ENCODE measurements at regions of chr16 and their contacts with region 1.

Region 1: GRCh38 chr16:86680162-86680561 is 101.8 kb downstream of the FOXL1 start:
- DNase-seq: peak in 1 of 2 donors; percentile 87
- H3K4me3 ChIP-seq: peak overlapping the region in 1 of 2 donors; percentile 57
- H3K27ac ChIP-seq: peak overlapping the region; percentile 93 to 94
- H3K4me1 ChIP-seq: peaks cover 3 to 44% of the 10 kb centered on the region in 2 donors
- H3K27me3 ChIP-seq: no peaks in the 10 kb centered on the region
- CTCF ChIP-seq: no peak

Region 2: DNA sequence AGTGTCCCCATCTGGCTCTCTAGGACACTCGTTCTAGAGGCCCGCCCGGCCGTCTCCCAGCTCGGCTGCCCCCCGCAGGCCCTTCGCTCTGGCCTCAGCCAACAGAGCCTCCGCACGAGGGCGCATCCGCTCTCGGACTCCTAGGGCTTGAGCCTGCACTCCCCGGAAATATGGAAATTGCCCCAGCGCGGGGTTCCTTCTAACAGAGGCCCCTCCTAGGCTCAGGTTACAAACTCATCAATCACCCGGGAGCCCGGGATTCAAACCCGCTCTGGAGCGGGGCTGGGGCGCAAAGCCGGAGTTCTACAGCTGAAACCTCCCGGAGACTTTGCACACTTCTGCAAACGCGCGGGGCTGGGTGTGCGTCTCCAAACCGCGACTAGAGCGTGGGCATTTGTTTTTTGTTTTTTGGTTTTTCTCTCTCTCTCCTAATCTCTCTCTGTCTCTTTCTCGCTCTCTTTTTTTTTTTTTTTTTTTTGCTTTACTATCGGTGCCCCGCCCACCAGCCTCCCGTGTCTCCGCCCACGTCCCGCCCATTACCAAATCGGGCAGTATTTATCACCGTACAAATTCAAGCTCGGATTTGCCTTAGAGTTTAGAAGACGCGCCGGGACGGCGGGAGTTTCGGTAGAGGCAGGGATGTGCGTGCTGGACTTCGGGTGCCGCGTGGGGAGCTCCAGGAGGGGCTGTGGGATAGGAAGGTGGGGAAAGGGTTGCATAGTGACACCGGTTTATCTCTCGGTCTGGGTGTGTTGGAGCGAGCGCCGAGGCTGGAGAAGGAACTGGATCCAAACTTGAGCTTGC is 104.2 kb before region 1 on chr16:
- intact Hi-C with region 1: loop called (anchors 2 kb)
- DNase-seq: peak; percentile 75 to 96
- H3K4me3 ChIP-seq: peak overlapping the region; percentile 57 to 79
- H3K27ac ChIP-seq: peak overlapping the region; percentile 91 to 99
- H3K4me1 ChIP-seq: peaks cover 7 to 53% of the 10 kb centered on the region in 2 donors
- H3K27me3 ChIP-seq: no peaks in the 10 kb centered on the region
- CTCF ChIP-seq: peak; percentile 68 to 75 (median 70)

Region 3: GRCh38 chr16:86740906-86741799 is 61.0 kb after region 1 on chr16:
- intact Hi-C with region 1: loop called (anchors 2 kb)
- DNase-seq: peak; percentile 60 to 93
- H3K4me3 ChIP-seq: peak overlapping the region; percentile 46 to 58
- H3K27ac ChIP-seq: peak overlapping the region; percentile 94 to 100
- H3K4me1 ChIP-seq: peaks cover 0 to 16% of the 10 kb centered on the region in 2 donors
- H3K27me3 ChIP-seq: no peaks in the 10 kb centered on the region
- CTCF ChIP-seq: no peak

Region 4: DNA sequence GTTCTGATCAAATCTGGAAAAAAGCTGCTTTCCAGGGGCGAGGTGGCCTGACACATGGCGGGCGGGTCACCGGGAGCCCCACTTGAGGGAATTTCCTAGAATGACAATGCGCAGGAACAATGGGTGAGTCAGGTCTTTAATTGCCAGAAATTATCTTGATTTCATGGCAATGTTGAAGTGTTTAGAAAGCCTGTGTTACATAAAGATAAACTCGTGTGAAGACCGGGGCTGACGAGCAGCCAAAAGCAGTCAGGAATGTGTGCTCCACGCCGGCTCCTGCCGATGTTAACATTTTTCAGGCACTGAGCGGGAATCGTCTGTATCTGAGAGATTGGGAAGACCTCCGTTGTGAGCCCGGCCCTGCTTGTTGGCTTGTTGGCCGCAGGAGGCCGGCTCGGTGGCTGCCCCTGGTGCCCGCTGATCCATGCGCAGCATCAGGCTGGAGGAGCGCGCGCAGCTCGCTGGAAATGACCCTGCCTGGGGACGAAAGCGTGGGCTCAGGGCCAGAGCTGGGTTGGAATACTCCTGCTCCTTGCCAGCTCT is 251.3 kb after region 1 on chr16:
- intact Hi-C with region 1: loop called (anchors 5 kb)
- DNase-seq: peak in 1 of 2 donors; percentile 80
- H3K4me3 ChIP-seq: peak overlapping the region; percentile 0 to 27
- H3K27ac ChIP-seq: peak overlapping the region; percentile 52 to 59
- H3K4me1 ChIP-seq: peaks cover 0 to 28% of the 10 kb centered on the region in 2 donors
- H3K27me3 ChIP-seq: no peaks in the 10 kb centered on the region
- CTCF ChIP-seq: peak in 1 of 3 experiments; percentile 19